CD8-positive, alpha-beta memory T cell (primary cell): ENCODE measurements at regions of chr19 and their contacts with region 1.

Region 1: DNA sequence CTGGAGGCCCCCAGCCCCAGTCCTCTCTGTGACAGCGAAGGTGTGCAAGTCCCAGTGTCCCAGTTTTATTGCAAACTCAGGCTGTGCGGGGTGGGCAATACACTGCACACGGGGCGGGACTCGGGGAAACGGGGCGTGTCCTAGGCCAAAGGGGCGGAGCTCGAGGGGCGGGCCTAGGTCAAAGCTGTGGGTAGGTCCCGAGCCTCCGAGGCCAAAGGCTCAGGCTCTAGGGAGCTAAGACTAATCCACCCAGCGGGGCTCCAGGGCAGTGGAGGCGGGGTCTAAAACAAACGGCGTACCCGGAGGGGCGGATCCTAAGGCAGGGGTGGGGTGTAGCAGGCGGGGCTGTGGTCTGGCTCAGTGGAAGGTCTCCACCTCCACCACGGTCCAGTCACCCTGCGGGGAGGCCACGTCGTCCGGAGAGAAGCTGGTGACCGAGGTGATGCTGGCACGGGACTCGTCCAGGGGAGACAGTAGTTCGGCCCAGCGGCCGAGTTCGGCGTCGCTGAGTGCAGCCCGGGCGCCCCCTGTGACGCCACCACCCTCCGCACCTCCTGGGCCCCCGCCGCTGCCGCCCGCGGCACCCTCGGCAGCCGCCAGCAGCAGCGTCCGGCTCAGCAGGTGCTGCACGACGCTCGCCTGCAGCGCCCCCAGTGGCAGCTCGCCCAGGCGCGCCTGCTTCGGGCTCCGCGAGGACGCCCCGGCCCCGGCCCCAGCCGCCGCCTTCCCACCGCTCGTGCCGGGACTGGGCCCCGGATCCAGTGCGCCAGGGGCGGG is 5.3 kb downstream of the PRR36 start:
- DNase-seq: peak; percentile 77 to 94 (median 87)
- H3K4me3 ChIP-seq: peak overlapping the region; percentile 81
- H3K4me3 Mint-ChIP-seq: peak overlapping the region; percentile 79 to 90 (median 82)
- H3K27ac ChIP-seq: peak overlapping the region; percentile 59
- H3K27ac Mint-ChIP-seq: peak overlapping the region; percentile 72 to 92 (median 81)
- H3K4me1 ChIP-seq: peaks cover 33% of the 10 kb centered on the region
- H3K4me1 Mint-ChIP-seq: peaks cover 33 to 52% (median 34%) of the 10 kb centered on the region in 3 donors
- H3K27me3 ChIP-seq: peaks cover 19% of the 10 kb centered on the region
- H3K27me3 Mint-ChIP-seq: peaks cover 15 to 41% of the 10 kb centered on the region in 2 donors

Region 2: DNA sequence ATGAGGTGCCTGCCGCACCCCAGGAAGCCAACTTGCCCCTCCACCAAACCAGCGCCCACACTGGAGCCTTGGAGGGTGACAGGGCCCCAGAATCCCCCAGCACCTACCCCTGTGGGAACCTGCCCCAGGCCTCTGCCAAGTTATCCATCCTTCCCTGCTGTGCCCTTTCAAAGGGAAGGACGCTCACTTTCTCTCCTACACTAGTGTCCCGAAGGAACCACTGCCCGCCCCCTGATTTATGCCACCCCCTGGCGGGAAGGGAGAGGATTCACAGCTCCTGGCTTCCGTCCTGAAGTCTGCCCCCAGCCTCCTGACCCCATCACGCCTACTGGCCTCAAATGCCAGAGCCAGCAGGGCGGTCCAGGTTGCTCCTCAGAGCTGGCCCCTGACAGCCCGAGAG is 37.4 kb before region 1 on chr19:
- CTCF ChIA-PET with region 1: interaction called, 10 read pairs
- POLR2A ChIA-PET with region 1: no interaction called
- DNase-seq: no peak
- H3K4me3 ChIP-seq: no peak overlapping the region
- H3K4me3 Mint-ChIP-seq: peak overlapping the region in 6 of 7 donors; percentile 78 to 89 (median 84)
- H3K27ac ChIP-seq: no peak overlapping the region
- H3K27ac Mint-ChIP-seq: peak overlapping the region in 2 of 8 donors; percentile 21 to 78
- H3K4me1 ChIP-seq: peaks cover 17% of the 10 kb centered on the region
- H3K4me1 Mint-ChIP-seq: peaks cover 13 to 28% (median 23%) of the 10 kb centered on the region in 3 donors
- H3K27me3 ChIP-seq: no peaks in the 10 kb centered on the region
- H3K27me3 Mint-ChIP-seq: no peaks in the 10 kb centered on the region

Region 3: DNA sequence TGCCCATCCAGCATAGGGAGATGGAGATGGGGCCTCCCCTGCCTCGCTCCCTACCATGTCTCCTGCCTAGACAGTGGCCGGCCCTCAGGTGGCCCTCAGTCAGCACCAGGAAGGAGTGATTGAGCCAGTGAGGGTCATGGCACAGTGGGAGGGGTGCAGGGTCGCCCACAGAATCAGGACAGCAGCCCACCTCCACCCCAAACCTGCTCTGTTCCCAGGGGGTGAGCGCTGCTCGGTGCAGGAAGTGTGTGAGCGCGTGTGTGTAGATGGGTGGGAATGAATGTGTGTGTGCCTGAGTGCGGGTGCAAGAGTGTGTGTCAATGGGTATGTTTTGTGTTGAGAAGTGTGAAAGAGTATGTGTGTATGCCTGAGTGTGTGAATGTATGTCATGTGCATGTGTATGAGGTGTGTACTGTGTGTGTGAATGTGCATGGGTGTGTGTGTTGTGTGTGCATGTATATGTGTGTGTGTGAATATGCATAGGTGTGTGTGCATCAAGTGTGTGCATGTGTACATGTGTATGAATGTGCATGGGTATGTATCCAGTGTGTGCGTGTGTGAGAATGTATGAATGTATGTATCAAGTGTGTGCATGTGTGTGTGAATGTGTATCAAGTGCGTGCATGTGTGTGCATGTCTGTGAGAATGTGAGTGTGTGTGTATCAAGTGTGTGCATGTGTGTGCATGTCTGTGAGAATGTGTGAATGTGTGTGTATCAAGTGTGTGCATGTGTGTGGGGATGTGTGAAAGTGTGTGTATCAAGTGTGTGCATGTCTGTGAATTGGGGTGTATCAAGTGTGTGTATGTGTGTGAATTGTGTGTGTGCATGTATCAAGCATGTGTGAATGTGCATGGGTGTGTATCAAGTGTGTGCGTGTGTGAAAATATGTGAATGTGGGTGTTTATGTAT is 26.9 kb before region 1 on chr19:
- CTCF ChIA-PET with region 1: no interaction called
- POLR2A ChIA-PET with region 1: no interaction called
- DNase-seq: no peak
- H3K4me3 ChIP-seq: no peak overlapping the region
- H3K4me3 Mint-ChIP-seq: no peak overlapping the region
- H3K27ac ChIP-seq: no peak overlapping the region
- H3K27ac Mint-ChIP-seq: no peak overlapping the region
- H3K4me1 ChIP-seq: no peaks in the 10 kb centered on the region
- H3K4me1 Mint-ChIP-seq: no peaks in the 10 kb centered on the region
- H3K27me3 ChIP-seq: no peaks in the 10 kb centered on the region
- H3K27me3 Mint-ChIP-seq: no peaks in the 10 kb centered on the region

Region 4: GRCh38 chr19:7858109-7858830 is 10.6 kb before region 1 on chr19:
- CTCF ChIA-PET with region 1: interaction called, 19 read pairs
- POLR2A ChIA-PET with region 1: interaction called, 6 read pairs
- DNase-seq: no peak
- H3K4me3 ChIP-seq: no peak overlapping the region
- H3K4me3 Mint-ChIP-seq: no peak overlapping the region
- H3K27ac ChIP-seq: peak overlapping the region; percentile 20
- H3K27ac Mint-ChIP-seq: no peak overlapping the region
- H3K4me1 ChIP-seq: peaks cover 18% of the 10 kb centered on the region
- H3K4me1 Mint-ChIP-seq: peaks cover 0 to 18% (median 6%) of the 10 kb centered on the region in 3 donors
- H3K27me3 ChIP-seq: peaks cover 12% of the 10 kb centered on the region
- H3K27me3 Mint-ChIP-seq: peaks cover 13 to 33% of the 10 kb centered on the region in 2 donors

Region 5: DNA sequence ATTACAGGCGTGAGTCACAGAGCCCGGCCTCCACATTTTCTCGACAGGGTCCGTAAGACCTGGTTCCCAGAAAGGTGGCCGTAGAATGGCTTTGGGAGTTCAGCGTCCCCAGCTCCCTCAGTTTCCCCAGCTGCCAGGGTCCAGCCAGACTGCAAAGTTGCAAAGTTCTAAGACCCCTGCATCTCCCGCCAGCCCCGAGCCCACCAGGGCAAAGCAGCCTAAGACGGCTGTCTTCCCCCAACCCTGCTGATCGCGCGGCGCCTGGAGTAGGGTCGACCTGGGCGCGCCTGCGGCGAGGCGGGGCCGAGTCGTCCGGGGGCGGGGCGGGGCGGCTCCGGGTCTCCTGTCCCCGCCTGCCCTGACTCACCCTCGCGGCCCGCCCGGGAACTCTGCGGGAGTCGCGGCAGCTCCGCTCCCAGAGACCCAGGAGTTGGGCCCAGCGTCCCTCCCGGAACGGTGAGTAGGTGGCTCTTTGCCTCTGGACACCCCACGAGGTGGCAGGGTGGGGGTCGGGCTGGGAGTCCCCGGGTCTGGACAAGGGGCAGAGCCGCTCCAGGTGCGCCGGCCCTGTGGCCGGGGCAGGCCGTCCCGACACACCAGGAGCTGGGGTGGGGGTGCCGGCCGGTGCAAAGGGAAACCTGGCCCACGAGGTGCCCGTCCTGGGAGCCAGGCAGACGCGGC is 19.4 kb after region 1 on chr19 and contains the start of gene LRRC8E:
- CTCF ChIA-PET with region 1: interaction called, 10 read pairs
- POLR2A ChIA-PET with region 1: no interaction called
- DNase-seq: no peak
- H3K4me3 ChIP-seq: no peak within 1 kb of the TSS
- H3K4me3 Mint-ChIP-seq: no peak within 1 kb of the TSS
- H3K27ac ChIP-seq: no peak within 1 kb of the TSS
- H3K27ac Mint-ChIP-seq: no peak within 1 kb of the TSS
- H3K4me1 ChIP-seq: no peaks in the 10 kb centered on the region
- H3K4me1 Mint-ChIP-seq: no peaks in the 10 kb centered on the region
- H3K27me3 ChIP-seq: no peaks in the 10 kb centered on the region
- H3K27me3 Mint-ChIP-seq: peaks cover 13 to 22% of the 10 kb centered on the region in 2 donors
- total RNA-seq, gene LRRC8E: not detected

Region 6: GRCh38 chr19:7919610-7920518 is 51.0 kb after region 1 on chr19 and contains the start of gene SNAPC2:
- CTCF ChIA-PET with region 1: interaction called, 37 read pairs
- POLR2A ChIA-PET with region 1: interaction called, 16 read pairs
- DNase-seq: peak; percentile 93 to 98 (median 97)
- H3K4me3 ChIP-seq: peak within 1 kb of the TSS; percentile 81
- H3K4me3 Mint-ChIP-seq: peak within 1 kb of the TSS; percentile 84 to 95 (median 86)
- H3K27ac ChIP-seq: peak within 1 kb of the TSS; percentile 68
- H3K27ac Mint-ChIP-seq: peak within 1 kb of the TSS; percentile 85 to 97 (median 92)
- H3K4me1 ChIP-seq: peaks cover 39% of the 10 kb centered on the region
- H3K4me1 Mint-ChIP-seq: peaks cover 26 to 63% (median 32%) of the 10 kb centered on the region in 3 donors
- H3K27me3 ChIP-seq: peaks cover 18% of the 10 kb centered on the region
- H3K27me3 Mint-ChIP-seq: peaks cover 25 to 29% of the 10 kb centered on the region in 2 donors
- total RNA-seq, gene SNAPC2: 17.4 to 18.2 TPM

Region 7: DNA sequence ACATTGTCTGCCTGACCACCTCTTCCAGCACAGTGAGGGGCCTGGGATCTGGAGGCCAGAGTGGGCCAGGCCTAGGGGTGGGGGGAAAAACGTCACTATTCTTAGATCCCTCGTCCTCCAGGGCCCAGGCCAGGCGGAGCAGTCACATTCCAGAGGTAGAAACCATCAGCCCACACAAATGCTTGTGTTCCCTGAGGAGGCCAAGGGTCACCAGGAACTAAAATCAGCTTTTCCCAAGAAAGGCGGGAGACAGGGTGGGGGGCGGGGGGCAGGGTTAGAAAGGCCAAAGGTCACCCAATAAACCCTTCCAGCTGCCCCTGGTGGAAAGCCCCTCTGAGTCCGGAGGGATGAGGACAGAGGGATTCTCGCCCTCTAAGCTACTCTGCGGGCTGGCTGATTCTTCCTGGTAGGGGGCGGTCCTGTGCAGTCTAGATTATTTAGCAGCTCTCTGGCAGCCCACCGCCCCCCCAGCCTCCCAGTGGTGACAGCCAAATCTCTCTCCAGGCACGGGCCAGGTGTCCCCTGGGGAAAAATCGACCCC is 160.2 kb after region 1 on chr19:
- CTCF ChIA-PET with region 1: no interaction called
- POLR2A ChIA-PET with region 1: no interaction called
- DNase-seq: no peak
- H3K4me3 ChIP-seq: no peak overlapping the region
- H3K4me3 Mint-ChIP-seq: no peak overlapping the region
- H3K27ac ChIP-seq: no peak overlapping the region
- H3K27ac Mint-ChIP-seq: no peak overlapping the region
- H3K4me1 ChIP-seq: no peaks in the 10 kb centered on the region
- H3K4me1 Mint-ChIP-seq: no peaks in the 10 kb centered on the region
- H3K27me3 ChIP-seq: no peaks in the 10 kb centered on the region
- H3K27me3 Mint-ChIP-seq: no peaks in the 10 kb centered on the region